Caco-2 (cell line): ENCODE measurements at regions of chr2 and their contacts with region 1.

Region 1: DNA sequence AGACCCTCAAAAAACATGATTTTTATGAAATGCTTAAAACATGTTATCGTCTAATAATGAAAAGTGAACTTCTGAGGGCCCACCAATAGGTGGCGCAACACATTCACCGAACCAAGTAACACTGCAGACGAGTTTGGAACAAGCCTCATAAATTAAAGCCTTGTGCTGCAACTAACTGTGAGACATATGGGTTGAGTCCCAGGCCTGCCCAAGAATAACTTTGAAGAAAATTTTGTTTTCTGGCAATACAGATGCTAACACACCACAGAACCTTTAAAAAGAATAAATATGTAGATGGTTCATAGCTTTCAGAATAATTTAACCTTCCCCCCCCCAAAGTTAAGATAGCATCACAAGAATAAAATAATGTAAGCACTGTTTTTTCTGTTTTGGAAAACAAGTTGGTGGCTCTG is 285.8 kb downstream of the RNF144A start:
- DNase-seq: peak in 1 of 2 experiments; percentile 59
- H3K4me3 ChIP-seq: no peak overlapping the region
- H3K4me3 Mint-ChIP-seq: no peak overlapping the region
- H3K27ac Mint-ChIP-seq: no peak overlapping the region
- H3K4me1 ChIP-seq: no peaks in the 10 kb centered on the region
- H3K4me1 Mint-ChIP-seq: no peaks in the 10 kb centered on the region
- H3K27me3 ChIP-seq: no peaks in the 10 kb centered on the region
- H3K27me3 Mint-ChIP-seq: peaks cover 14% of the 10 kb centered on the region
- CTCF ChIP-seq: peak; percentile 84 to 92

Region 2: DNA sequence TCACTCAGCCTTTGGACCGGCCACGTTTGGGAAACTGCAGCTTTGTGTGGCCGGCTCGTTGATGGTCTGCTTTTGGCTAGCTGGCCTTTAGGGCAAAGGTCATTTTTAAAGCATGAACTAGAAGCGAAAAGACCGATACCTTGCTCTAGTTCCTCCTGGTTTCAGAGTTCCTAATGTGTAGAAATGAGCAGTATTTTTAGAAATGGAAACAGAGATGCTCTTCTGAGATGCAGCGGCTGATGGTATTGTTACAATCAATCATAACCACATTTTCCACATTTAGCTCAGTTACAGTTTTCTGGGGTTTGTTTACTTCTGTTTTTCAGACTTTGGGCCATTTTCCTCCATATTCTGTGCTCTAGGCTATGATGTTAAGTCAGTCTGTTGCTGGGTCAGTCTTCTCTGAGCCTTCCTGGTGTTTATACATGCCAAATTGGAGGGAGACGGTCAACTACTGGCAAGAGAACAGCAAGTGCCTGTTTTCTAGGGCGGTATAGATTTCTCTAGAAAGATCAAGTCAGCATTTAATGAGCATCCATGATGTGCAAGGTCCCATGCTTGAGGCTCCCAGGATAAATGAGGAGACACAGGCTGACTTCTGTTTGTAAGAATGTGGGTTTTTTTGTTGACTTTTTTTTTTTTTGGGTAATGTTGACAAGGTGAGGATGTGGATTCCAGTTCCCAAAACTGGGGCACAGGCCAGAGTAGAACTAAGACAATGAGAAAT is 257.8 kb before region 1 on chr2:
- CTCF ChIA-PET with region 1: no interaction called
- POLR2A ChIA-PET with region 1: no interaction called
- intact Hi-C with region 1: no loop called
- DNase-seq: no peak
- H3K4me3 ChIP-seq: no peak overlapping the region
- H3K4me3 Mint-ChIP-seq: no peak overlapping the region
- H3K27ac Mint-ChIP-seq: no peak overlapping the region
- H3K4me1 ChIP-seq: no peaks in the 10 kb centered on the region
- H3K4me1 Mint-ChIP-seq: no peaks in the 10 kb centered on the region
- H3K27me3 ChIP-seq: no peaks in the 10 kb centered on the region; the same call in 1 of the 2 replicates
- H3K27me3 Mint-ChIP-seq: no peaks in the 10 kb centered on the region
- CTCF ChIP-seq: no peak

Region 3: GRCh38 chr2:7097348-7097895 is 105.6 kb before region 1 on chr2:
- CTCF ChIA-PET with region 1: no interaction called
- POLR2A ChIA-PET with region 1: no interaction called
- intact Hi-C with region 1: loop called (anchors 1 kb)
- DNase-seq: peak in 1 of 2 experiments; percentile 77
- H3K4me3 ChIP-seq: no peak overlapping the region
- H3K4me3 Mint-ChIP-seq: peak overlapping the region; percentile 27
- H3K27ac Mint-ChIP-seq: no peak overlapping the region
- H3K4me1 ChIP-seq: no peaks in the 10 kb centered on the region
- H3K4me1 Mint-ChIP-seq: peaks cover under 1% of the 10 kb centered on the region
- H3K27me3 ChIP-seq: no peaks in the 10 kb centered on the region
- H3K27me3 Mint-ChIP-seq: peaks cover 12% of the 10 kb centered on the region
- CTCF ChIP-seq: peak; percentile 93 to 96

Region 4: GRCh38 chr2:7118606-7119503 is 84.2 kb before region 1 on chr2:
- CTCF ChIA-PET with region 1: interaction called, 7 read pairs
- POLR2A ChIA-PET with region 1: no interaction called
- intact Hi-C with region 1: loop called (anchors 5 kb)
- DNase-seq: peak in 1 of 2 experiments; percentile 38
- H3K4me3 ChIP-seq: no peak overlapping the region
- H3K4me3 Mint-ChIP-seq: no peak overlapping the region
- H3K27ac Mint-ChIP-seq: no peak overlapping the region
- H3K4me1 ChIP-seq: no peaks in the 10 kb centered on the region
- H3K4me1 Mint-ChIP-seq: no peaks in the 10 kb centered on the region
- H3K27me3 ChIP-seq: peaks cover 2% of the 10 kb centered on the region; the same call in 1 of the 2 replicates
- H3K27me3 Mint-ChIP-seq: peaks cover 18% of the 10 kb centered on the region
- CTCF ChIP-seq: peak; percentile 46 to 55

Region 5: GRCh38 chr2:7356909-7357584 is 154.0 kb after region 1 on chr2:
- CTCF ChIA-PET with region 1: no interaction called
- POLR2A ChIA-PET with region 1: no interaction called
- intact Hi-C with region 1: loop called (anchors 2 kb)
- DNase-seq: peak; percentile 15 to 48
- H3K4me3 ChIP-seq: no peak overlapping the region
- H3K4me3 Mint-ChIP-seq: no peak overlapping the region
- H3K27ac Mint-ChIP-seq: no peak overlapping the region
- H3K4me1 ChIP-seq: no peaks in the 10 kb centered on the region
- H3K4me1 Mint-ChIP-seq: no peaks in the 10 kb centered on the region
- H3K27me3 ChIP-seq: no peaks in the 10 kb centered on the region
- H3K27me3 Mint-ChIP-seq: peaks cover 2% of the 10 kb centered on the region
- CTCF ChIP-seq: peak in 1 of 2 experiments; percentile 16

Region 6: GRCh38 chr2:7363906-7364305 is 160.8 kb after region 1 on chr2:
- CTCF ChIA-PET with region 1: no interaction called
- POLR2A ChIA-PET with region 1: no interaction called
- intact Hi-C with region 1: loop called (anchors 1 kb)
- DNase-seq: peak in 1 of 2 experiments; percentile 19
- H3K4me3 ChIP-seq: no peak overlapping the region
- H3K4me3 Mint-ChIP-seq: no peak overlapping the region
- H3K27ac Mint-ChIP-seq: no peak overlapping the region
- H3K4me1 ChIP-seq: no peaks in the 10 kb centered on the region
- H3K4me1 Mint-ChIP-seq: no peaks in the 10 kb centered on the region
- H3K27me3 ChIP-seq: no peaks in the 10 kb centered on the region
- H3K27me3 Mint-ChIP-seq: no peaks in the 10 kb centered on the region
- CTCF ChIP-seq: peak; percentile 48 to 52

Region 7: GRCh38 chr2:7377916-7378569 is 175.0 kb after region 1 on chr2:
- CTCF ChIA-PET with region 1: no interaction called
- POLR2A ChIA-PET with region 1: no interaction called
- intact Hi-C with region 1: loop called (anchors 5 kb)
- DNase-seq: peak; percentile 19 to 41
- H3K4me3 ChIP-seq: no peak overlapping the region
- H3K4me3 Mint-ChIP-seq: no peak overlapping the region
- H3K27ac Mint-ChIP-seq: no peak overlapping the region
- H3K4me1 ChIP-seq: no peaks in the 10 kb centered on the region
- H3K4me1 Mint-ChIP-seq: no peaks in the 10 kb centered on the region
- H3K27me3 ChIP-seq: no peaks in the 10 kb centered on the region
- H3K27me3 Mint-ChIP-seq: peaks cover 10% of the 10 kb centered on the region
- CTCF ChIP-seq: peak in 1 of 2 experiments; percentile 13